ENCODE measurements at regions of chr21 and their contacts with region 1.

Region 1: DNA sequence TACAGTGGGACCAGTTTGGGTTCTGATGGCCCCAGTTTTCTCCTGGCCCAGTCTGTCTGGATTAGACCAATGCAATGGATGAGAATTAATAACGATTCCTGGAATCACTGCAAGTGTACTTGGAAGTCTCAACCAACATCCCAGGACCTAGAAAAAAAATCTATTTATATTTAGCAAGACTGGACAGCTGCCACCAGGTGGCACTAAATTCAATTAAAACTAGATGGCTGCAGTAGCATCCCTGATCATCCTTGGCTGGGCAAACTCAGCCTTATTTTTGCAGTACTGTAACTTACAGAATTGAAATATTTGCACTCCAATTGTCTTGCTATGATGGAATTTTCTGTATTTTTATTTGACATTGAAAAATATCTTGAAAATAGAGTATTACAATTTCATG is 165.7 kb downstream of the NCAM2 start:
- DNase-seq: peak in 7 of 9 donors; percentile 5 to 51 (median 24)
- ATAC-seq: peak; percentile 59
- H3K4me3 ChIP-seq: no peak overlapping the region
- H3K4me3 Mint-ChIP-seq: no peak overlapping the region
- H3K27ac ChIP-seq: no peak overlapping the region
- H3K27ac Mint-ChIP-seq: no peak overlapping the region
- H3K4me1 ChIP-seq: no peaks in the 10 kb centered on the region
- H3K4me1 Mint-ChIP-seq: peaks cover 0 to 8% (median 0%) of the 10 kb centered on the region in 7 donors
- H3K27me3 ChIP-seq: no peaks in the 10 kb centered on the region
- H3K27me3 Mint-ChIP-seq: peaks cover 0 to 2% (median 0%) of the 10 kb centered on the region in 5 donors

Region 2: GRCh38 chr21:21373969-21374368 is 210.1 kb after region 1 on chr21:
- CTCF ChIA-PET with region 1: no interaction called
- POLR2A ChIA-PET with region 1: no interaction called
- intact Hi-C with region 1: loop called in 1 of 2 experiments (anchors 1 kb)
- DNase-seq: no peak
- ATAC-seq: no peak
- H3K4me3 ChIP-seq: no peak overlapping the region
- H3K4me3 Mint-ChIP-seq: no peak overlapping the region
- H3K27ac ChIP-seq: no peak overlapping the region
- H3K27ac Mint-ChIP-seq: no peak overlapping the region
- H3K4me1 ChIP-seq: no peaks in the 10 kb centered on the region
- H3K4me1 Mint-ChIP-seq: no peaks in the 10 kb centered on the region
- H3K27me3 ChIP-seq: no peaks in the 10 kb centered on the region
- H3K27me3 Mint-ChIP-seq: no peaks in the 10 kb centered on the region

Region 3: GRCh38 chr21:21688875-21689274 is 525.0 kb after region 1 on chr21:
- CTCF ChIA-PET with region 1: no interaction called
- POLR2A ChIA-PET with region 1: no interaction called
- intact Hi-C with region 1: loop called in 1 of 2 experiments (anchors 10 kb)
- DNase-seq: no peak
- ATAC-seq: no peak
- H3K4me3 ChIP-seq: no peak overlapping the region
- H3K4me3 Mint-ChIP-seq: no peak overlapping the region
- H3K27ac ChIP-seq: no peak overlapping the region
- H3K27ac Mint-ChIP-seq: no peak overlapping the region
- H3K4me1 ChIP-seq: no peaks in the 10 kb centered on the region
- H3K4me1 Mint-ChIP-seq: no peaks in the 10 kb centered on the region
- H3K27me3 ChIP-seq: no peaks in the 10 kb centered on the region
- H3K27me3 Mint-ChIP-seq: no peaks in the 10 kb centered on the region

Region 4: GRCh38 chr21:21921421-21922232 is 757.7 kb after region 1 on chr21:
- CTCF ChIA-PET with region 1: no interaction called
- POLR2A ChIA-PET with region 1: no interaction called
- intact Hi-C with region 1: loop called in 1 of 2 experiments (anchors 1 kb)
- DNase-seq: peak in 1 of 9 donors; percentile 2
- ATAC-seq: no peak
- H3K4me3 ChIP-seq: no peak overlapping the region
- H3K4me3 Mint-ChIP-seq: no peak overlapping the region
- H3K27ac ChIP-seq: no peak overlapping the region
- H3K27ac Mint-ChIP-seq: no peak overlapping the region
- H3K4me1 ChIP-seq: no peaks in the 10 kb centered on the region
- H3K4me1 Mint-ChIP-seq: no peaks in the 10 kb centered on the region
- H3K27me3 ChIP-seq: no peaks in the 10 kb centered on the region
- H3K27me3 Mint-ChIP-seq: no peaks in the 10 kb centered on the region

Region 5: GRCh38 chr21:22791986-22792560 is 1628.2 kb after region 1 on chr21:
- CTCF ChIA-PET with region 1: interaction called, 5 read pairs
- POLR2A ChIA-PET with region 1: no interaction called
- intact Hi-C with region 1: loop called (anchors 1 to 2 kb)
- DNase-seq: peak in 7 of 9 donors; percentile 12 to 54 (median 19)
- ATAC-seq: peak; percentile 38
- H3K4me3 ChIP-seq: no peak overlapping the region
- H3K4me3 Mint-ChIP-seq: no peak overlapping the region
- H3K27ac ChIP-seq: no peak overlapping the region
- H3K27ac Mint-ChIP-seq: no peak overlapping the region
- H3K4me1 ChIP-seq: no peaks in the 10 kb centered on the region
- H3K4me1 Mint-ChIP-seq: peaks cover 0 to 2% (median 0%) of the 10 kb centered on the region in 7 donors
- H3K27me3 ChIP-seq: no peaks in the 10 kb centered on the region
- H3K27me3 Mint-ChIP-seq: no peaks in the 10 kb centered on the region